Transverse colon (tissue), 4 donors: ENCODE measurements at regions of chr9 and their contacts with region 1.

Region 1: DNA sequence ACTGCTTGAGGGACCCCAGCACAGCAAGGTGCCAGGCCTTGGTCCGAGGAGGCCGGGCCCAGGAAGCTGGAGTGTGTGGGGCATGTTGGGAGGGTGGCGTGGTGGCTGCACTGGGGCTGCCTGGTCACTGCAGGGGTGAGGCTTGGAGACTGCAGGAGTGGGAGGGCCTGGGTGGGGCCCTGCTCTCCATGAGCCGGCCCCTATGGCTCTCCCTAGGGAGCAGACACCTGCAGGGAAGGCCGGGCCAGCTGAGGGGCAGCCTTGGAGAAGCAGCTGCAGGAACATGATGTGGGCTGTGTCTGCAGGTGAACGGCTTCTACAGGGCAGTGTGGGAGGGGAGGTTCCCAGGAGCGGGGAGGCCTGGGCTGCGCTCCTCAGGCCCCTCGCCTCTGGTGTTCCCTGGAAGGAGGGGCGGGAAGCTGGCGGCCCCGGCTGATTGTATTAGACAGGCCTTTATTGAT is 41.7 kb upstream of the TMEM250 start:
- DNase-seq: no peak
- H3K4me3 ChIP-seq: no peak overlapping the region
- H3K27ac ChIP-seq: no peak overlapping the region
- H3K4me1 ChIP-seq: no peaks in the 10 kb centered on the region
- H3K27me3 ChIP-seq: peaks cover 34% of the 10 kb centered on the region
- CTCF ChIP-seq: no peak
- EP300 ChIP-seq: no peak
- POLR2A ChIP-seq: no peak

Region 2: GRCh38 chr9:135939351-135940265 is 220.8 kb before region 1 on chr9:
- in situ Hi-C with region 1: no loop called
- intact Hi-C with region 1: no loop called
- DNase-seq: no peak
- H3K4me3 ChIP-seq: no peak overlapping the region
- H3K27ac ChIP-seq: no peak overlapping the region
- H3K4me1 ChIP-seq: no peaks in the 10 kb centered on the region
- H3K27me3 ChIP-seq: no peaks in the 10 kb centered on the region
- CTCF ChIP-seq: no peak
- EP300 ChIP-seq: no peak
- POLR2A ChIP-seq: no peak

Region 3: GRCh38 chr9:136275655-136276429 is 115.4 kb after region 1 on chr9:
- in situ Hi-C with region 1: loop called in 2 of 4 experiments (anchors 10 kb)
- intact Hi-C with region 1: loop called (anchors 10 kb)
- DNase-seq: no peak
- H3K4me3 ChIP-seq: no peak overlapping the region
- H3K27ac ChIP-seq: no peak overlapping the region
- H3K4me1 ChIP-seq: no peaks in the 10 kb centered on the region
- H3K27me3 ChIP-seq: peaks cover 14% of the 10 kb centered on the region
- CTCF ChIP-seq: no peak
- EP300 ChIP-seq: no peak
- POLR2A ChIP-seq: no peak

Region 4: GRCh38 chr9:136283291-136284235 is 123.2 kb after region 1 on chr9:
- in situ Hi-C with region 1: loop called in 2 of 4 experiments (anchors 10 kb)
- intact Hi-C with region 1: loop called (anchors 10 kb)
- DNase-seq: peak; percentile 82
- H3K4me3 ChIP-seq: peak overlapping the region in 3 of 4 donors; percentile 6 to 31 (median 15)
- H3K27ac ChIP-seq: peak overlapping the region in 1 of 4 donors; percentile 32
- H3K4me1 ChIP-seq: peaks cover 5 to 8% (median 7%) of the 10 kb centered on the region in 4 donors
- H3K27me3 ChIP-seq: peaks cover 32% of the 10 kb centered on the region
- CTCF ChIP-seq: peak; percentile 73 to 84 (median 82)
- EP300 ChIP-seq: no peak
- POLR2A ChIP-seq: no peak

Region 5: DNA sequence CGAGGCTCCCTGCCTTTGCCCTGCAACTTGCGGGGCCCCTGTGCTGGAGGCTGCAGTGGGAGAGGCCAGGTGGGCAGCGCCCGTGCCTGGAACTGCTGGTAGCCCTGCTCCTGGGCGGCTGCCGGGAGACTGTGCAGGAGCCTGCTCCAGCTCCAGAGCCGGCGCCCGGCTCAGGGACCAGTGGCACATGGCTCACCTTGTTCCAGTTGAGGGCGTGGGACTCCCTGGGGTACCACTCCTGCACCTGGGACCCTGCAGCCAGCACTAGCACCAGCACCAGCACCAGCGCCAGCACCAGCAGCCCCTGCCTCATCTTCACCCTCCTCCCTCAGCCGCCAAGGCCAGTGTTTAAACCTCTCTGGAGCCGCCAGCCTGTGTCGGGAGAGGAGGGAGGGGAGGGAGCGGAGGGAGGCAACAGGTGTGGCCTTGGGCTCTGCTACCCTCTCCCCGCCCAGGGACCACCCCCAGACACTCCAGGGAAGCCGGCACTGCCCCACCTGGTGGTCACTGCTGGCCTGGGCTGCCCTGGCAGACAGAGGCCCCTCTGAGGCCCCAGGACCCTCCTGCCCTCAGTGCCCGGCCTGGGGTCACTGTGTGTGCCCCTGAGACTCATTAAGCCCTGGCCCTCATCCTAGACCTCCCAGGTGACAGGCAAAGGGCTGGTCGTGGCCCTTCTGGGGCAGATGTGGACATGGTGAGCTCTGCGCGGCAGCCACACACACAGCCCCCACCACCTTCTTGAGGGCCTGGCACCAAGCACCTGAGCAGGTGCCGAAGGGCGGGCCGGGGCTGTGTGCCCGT is 582.4 kb after region 1 on chr9 and contains the start of gene LCN10:
- in situ Hi-C with region 1: no loop called
- intact Hi-C with region 1: no loop called
- DNase-seq: no peak
- H3K4me3 ChIP-seq: peak within 1 kb of the TSS in 1 of 4 donors; percentile 13
- H3K27ac ChIP-seq: no peak within 1 kb of the TSS
- H3K4me1 ChIP-seq: peaks cover 6 to 21% (median 13%) of the 10 kb centered on the region in 4 donors
- H3K27me3 ChIP-seq: peaks cover 53% of the 10 kb centered on the region
- CTCF ChIP-seq: peak in 3 of 5 experiments; percentile 18 to 23 (median 18)
- EP300 ChIP-seq: no peak
- POLR2A ChIP-seq: no peak
- total RNA-seq, gene LCN10: 0.96 to 33.6 (median 3.3) TPM